ENCODE measurements at regions of chr3 and their contacts with region 1.

Region 1: GRCh38 chr3:59450946-59451763 is 401.3 kb upstream of the CFAP20DC start:
- DNase-seq: peak; percentile 79
- H3K4me3 Mint-ChIP-seq: peak overlapping the region; percentile 41
- H3K27ac Mint-ChIP-seq: peak overlapping the region; percentile 94
- H3K4me1 Mint-ChIP-seq: peaks cover 70% of the 10 kb centered on the region
- H3K27me3 Mint-ChIP-seq: no peaks in the 10 kb centered on the region

Region 2: DNA sequence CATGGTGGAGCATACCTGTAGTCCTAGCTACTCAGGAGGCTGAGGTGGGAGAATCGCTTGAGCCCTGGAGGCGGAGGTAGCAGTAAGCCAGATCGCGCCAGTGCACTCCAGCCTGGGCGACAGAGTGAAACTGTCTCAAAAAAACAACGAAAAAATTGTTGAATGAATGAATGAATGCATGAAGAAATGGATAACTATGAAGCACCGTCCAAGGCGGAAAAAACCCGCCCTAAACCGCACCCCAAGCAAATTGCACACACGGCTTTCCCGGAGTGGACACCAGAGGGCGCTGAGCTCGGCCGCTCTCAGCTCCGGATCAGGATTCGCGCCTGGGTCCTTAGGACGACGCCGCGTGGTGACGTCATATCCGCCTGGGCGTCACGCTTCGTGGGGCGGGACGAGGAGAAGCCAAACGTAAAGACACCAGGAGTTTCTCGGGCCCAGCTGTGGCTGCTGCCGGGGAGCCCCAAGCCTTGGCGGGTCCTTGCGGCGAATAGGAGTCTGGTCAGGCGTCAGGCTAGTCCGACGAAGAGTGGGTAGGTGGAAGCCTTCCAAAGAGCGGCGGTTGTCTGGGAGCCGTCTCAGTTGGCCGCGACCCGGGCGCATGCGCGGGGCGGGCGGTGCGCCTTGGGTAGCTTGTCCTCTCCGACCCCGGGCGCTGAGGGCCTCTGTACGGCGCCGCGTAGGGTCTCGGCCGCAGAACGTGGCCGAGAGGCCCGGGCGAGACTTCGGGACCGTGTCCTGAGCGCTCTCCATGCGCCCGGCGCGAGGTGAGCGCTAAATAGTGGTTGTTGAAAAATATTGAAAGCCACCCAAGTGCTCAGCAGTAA is 1145.1 kb before region 1 on chr3 and contains the starts of genes HTD2 and RPP14:
- CTCF ChIA-PET with region 1: no interaction called
- intact Hi-C with region 1: no loop called
- DNase-seq: peak; percentile 99
- H3K4me3 Mint-ChIP-seq: peak within 1 kb of the TSS; percentile 99
- H3K27ac Mint-ChIP-seq: peak within 1 kb of the TSS; percentile 96
- H3K4me1 Mint-ChIP-seq: peaks cover 26% of the 10 kb centered on the region
- H3K27me3 Mint-ChIP-seq: peaks cover 5% of the 10 kb centered on the region
- total RNA-seq, gene HTD2: 6.9 to 8.1 TPM
- total RNA-seq, gene RPP14: 12.1 to 14.4 TPM

Region 3: GRCh38 chr3:59313365-59313764 is 137.8 kb before region 1 on chr3:
- CTCF ChIA-PET with region 1: no interaction called
- intact Hi-C with region 1: loop called (anchors 10 kb)
- DNase-seq: peak; percentile 74
- H3K4me3 Mint-ChIP-seq: no peak overlapping the region
- H3K27ac Mint-ChIP-seq: no peak overlapping the region
- H3K4me1 Mint-ChIP-seq: peaks cover 22% of the 10 kb centered on the region
- H3K27me3 Mint-ChIP-seq: no peaks in the 10 kb centered on the region

Region 4: DNA sequence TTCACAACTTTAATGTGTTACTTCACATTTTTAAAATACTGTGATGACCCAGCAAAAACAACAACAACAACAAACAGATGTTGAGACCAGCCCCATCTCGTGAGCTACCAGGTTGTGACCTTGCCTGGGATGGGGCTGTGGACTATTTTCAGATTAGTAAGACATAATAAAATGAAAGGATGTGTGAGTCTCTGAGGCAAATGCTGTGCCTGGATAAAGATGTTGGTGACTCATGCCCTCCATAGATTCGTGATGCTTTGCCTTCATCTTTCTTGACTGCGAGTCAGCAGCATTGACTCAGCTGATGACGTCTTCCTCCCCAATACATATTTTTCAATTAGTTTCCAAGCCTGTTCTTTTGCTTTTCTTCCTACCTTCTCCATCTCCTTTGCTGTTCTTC is 51.7 kb after region 1 on chr3:
- CTCF ChIA-PET with region 1: no interaction called
- intact Hi-C with region 1: loop called (anchors 1 kb)
- DNase-seq: peak; percentile 73
- H3K4me3 Mint-ChIP-seq: no peak overlapping the region
- H3K27ac Mint-ChIP-seq: no peak overlapping the region
- H3K4me1 Mint-ChIP-seq: peaks cover 18% of the 10 kb centered on the region
- H3K27me3 Mint-ChIP-seq: no peaks in the 10 kb centered on the region

Region 5: GRCh38 chr3:59559721-59560435 is 108.7 kb after region 1 on chr3:
- CTCF ChIA-PET with region 1: no interaction called
- intact Hi-C with region 1: loop called (anchors 1 kb)
- DNase-seq: peak; percentile 71
- H3K4me3 Mint-ChIP-seq: no peak overlapping the region
- H3K27ac Mint-ChIP-seq: peak overlapping the region; percentile 84
- H3K4me1 Mint-ChIP-seq: peaks cover 24% of the 10 kb centered on the region
- H3K27me3 Mint-ChIP-seq: no peaks in the 10 kb centered on the region

Region 6: GRCh38 chr3:59935025-59935424 is 483.9 kb after region 1 on chr3:
- CTCF ChIA-PET with region 1: no interaction called
- intact Hi-C with region 1: loop called (anchors 2 kb)
- DNase-seq: peak; percentile 53
- H3K4me3 Mint-ChIP-seq: peak overlapping the region; percentile 50
- H3K27ac Mint-ChIP-seq: peak overlapping the region; percentile 78
- H3K4me1 Mint-ChIP-seq: peaks cover 89% of the 10 kb centered on the region
- H3K27me3 Mint-ChIP-seq: no peaks in the 10 kb centered on the region

Region 7: GRCh38 chr3:60046210-60046609 is 595.1 kb after region 1 on chr3:
- CTCF ChIA-PET with region 1: no interaction called
- intact Hi-C with region 1: loop called (anchors 10 kb)
- DNase-seq: no peak
- H3K4me3 Mint-ChIP-seq: no peak overlapping the region
- H3K27ac Mint-ChIP-seq: peak overlapping the region; percentile 91
- H3K4me1 Mint-ChIP-seq: peaks cover 80% of the 10 kb centered on the region
- H3K27me3 Mint-ChIP-seq: no peaks in the 10 kb centered on the region